ENCODE measurements at regions of chr7 and their contacts with region 1.

Region 1: DNA sequence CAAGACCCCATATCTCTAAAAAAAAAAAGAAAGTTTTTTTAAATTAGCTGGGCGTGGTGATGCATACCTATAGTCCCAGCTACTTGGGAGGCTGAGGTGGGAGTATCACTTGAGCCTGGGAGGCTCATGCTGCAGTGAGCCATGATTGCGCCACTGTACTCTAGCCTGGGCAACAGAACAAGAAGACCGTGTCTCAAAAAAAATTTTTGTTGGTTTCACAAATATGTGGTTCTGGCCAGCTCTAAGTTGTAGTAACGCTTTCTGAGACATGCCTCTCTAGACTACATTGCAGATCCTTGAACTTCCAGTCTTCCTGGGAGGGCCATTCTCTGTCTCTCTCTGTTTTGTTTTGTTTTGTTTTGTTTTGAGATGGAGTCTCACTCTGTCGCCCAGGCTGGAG is 24.6 kb upstream of the RHBDD2 start:
- DNase-seq: no peak
- H3K4me3 ChIP-seq: no peak overlapping the region
- H3K27ac ChIP-seq: no peak overlapping the region
- H3K4me1 ChIP-seq: no peaks in the 10 kb centered on the region
- H3K27me3 ChIP-seq: no peaks in the 10 kb centered on the region
- CTCF ChIP-seq: no peak

Region 2: DNA sequence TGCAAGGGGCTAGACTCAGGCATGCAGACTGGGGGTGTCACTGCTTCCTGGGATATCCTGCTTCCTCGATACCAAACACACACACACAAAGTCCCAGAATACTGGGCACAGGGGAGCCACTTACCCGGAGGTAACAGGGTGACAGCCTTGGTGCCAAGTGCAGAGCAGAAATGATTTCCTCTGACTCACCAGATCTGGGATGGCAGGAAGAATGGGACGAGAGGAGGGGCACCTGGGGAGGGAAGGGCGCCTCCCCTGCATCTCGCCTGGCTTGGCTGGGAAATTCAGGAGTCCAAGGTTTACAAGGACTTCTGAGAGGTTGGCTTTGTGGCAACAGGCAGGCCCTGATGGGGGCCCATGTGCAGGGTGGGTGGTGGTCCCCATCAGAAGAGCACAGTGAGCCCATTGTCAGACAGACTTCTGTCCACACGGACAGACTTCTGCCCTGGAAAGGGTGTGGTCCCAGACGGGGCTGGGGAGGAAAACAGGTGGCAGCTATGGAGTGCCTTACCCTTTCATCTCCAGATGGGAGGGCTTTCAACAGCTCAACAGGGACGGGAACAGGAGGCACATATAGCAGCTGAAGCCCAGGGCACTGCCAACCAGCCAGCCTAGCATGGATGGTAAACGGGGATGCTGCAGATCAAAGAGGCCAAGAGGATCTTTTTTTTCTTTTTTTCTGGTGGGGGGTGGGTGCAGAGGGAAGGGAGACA is 30.9 kb before region 1 on chr7:
- CTCF ChIA-PET with region 1: interaction called, 12 read pairs
- POLR2A ChIA-PET with region 1: no interaction called
- intact Hi-C with region 1: no loop called
- DNase-seq: peak in 1 of 2 experiments; percentile 15
- H3K4me3 ChIP-seq: no peak overlapping the region
- H3K27ac ChIP-seq: no peak overlapping the region
- H3K4me1 ChIP-seq: peaks cover 10% of the 10 kb centered on the region
- H3K27me3 ChIP-seq: no peaks in the 10 kb centered on the region
- CTCF ChIP-seq: no peak

Region 3: DNA sequence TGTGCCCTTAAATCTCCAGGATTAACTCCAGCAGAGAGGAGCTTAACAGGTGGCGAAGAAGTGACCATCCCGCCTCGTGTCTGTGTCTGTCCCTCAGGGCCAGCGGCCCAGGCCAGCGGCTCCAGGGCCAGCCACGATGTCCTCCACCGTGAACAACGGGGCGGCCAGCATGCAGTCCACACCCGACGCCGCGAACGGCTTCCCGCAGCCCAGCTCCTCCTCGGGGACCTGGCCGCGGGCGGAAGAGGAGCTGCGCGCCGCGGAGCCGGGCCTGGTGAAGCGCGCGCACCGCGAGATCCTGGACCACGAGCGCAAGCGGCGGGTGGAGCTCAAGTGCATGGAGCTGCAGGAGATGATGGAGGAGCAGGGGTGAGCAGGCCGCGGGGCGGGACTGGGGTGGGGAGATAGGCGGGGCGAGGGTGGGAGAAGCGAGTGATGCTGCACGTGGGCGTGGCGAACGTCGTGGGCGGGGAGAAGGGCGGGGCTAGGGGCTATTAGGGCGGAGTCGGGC is 380.8 kb after region 1 on chr7:
- CTCF ChIA-PET with region 1: no interaction called
- POLR2A ChIA-PET with region 1: no interaction called
- intact Hi-C with region 1: no loop called
- DNase-seq: peak in 1 of 2 experiments; percentile 82
- H3K4me3 ChIP-seq: no peak overlapping the region
- H3K27ac ChIP-seq: no peak overlapping the region
- H3K4me1 ChIP-seq: no peaks in the 10 kb centered on the region
- H3K27me3 ChIP-seq: peaks cover 31% of the 10 kb centered on the region
- CTCF ChIP-seq: no peak

Measured in PC-9 (cell line).